Right cardiac atrium (tissue), 5 donors: ENCODE measurements at regions of chr13 and their contacts with region 1.

Region 1: DNA sequence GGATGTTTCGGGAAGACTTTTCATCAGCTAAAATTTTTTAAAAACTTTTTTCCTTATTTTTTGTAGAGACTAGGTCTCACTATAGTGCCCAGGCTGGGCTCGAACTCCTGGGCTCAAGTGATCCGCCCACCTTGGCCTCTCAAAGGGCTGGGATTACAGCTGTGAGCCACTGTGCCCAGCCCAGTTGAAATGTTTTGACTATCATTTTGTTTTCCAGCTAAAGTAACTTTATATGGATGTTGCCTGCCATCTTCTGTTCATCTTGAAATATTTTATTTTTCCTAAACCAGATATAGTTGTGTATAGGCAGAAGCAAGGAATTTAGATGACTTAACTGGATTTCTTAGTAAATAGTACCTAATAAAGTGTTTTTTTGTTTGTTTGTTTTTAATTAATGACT is 7.0 kb downstream of the CAB39L start:
- DNase-seq: peak; percentile 61 to 87 (median 76)
- ATAC-seq: peak; percentile 84 to 86
- H3K4me3 ChIP-seq: no peak overlapping the region
- H3K27ac ChIP-seq: no peak overlapping the region
- H3K4me1 ChIP-seq: no peaks in the 10 kb centered on the region
- H3K27me3 ChIP-seq: no peaks in the 10 kb centered on the region

Region 2: GRCh38 chr13:49300739-49301589 is 135.9 kb before region 1 on chr13:
- intact Hi-C with region 1: loop called (anchors 5 kb)
- DNase-seq: peak; percentile 46 to 79 (median 70)
- ATAC-seq: peak; percentile 71 to 74
- H3K4me3 ChIP-seq: no peak overlapping the region
- H3K27ac ChIP-seq: no peak overlapping the region
- H3K4me1 ChIP-seq: peaks cover 6% of the 10 kb centered on the region
- H3K27me3 ChIP-seq: no peaks in the 10 kb centered on the region

Region 3: DNA sequence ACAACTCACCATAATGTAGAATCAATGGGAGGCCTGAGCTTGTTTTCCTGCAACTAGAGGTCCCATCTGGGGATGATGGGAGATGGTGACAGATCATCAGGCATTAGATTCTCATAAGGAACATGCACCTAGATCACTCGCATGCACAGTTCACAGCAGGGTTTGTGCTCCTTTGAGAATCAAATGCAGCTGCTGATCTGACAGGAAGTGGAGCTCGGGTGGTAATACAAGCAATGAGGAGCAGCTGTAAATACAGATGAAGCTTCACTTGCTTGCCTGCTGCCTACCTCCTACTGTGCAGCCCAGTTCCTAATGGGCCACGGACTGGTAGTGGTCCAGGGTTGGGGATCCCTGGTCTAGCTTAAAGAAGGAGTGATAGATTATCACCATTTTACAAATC is 322.6 kb after region 1 on chr13:
- intact Hi-C with region 1: no loop called
- DNase-seq: no peak
- ATAC-seq: no peak
- H3K4me3 ChIP-seq: no peak overlapping the region
- H3K27ac ChIP-seq: no peak overlapping the region
- H3K4me1 ChIP-seq: no peaks in the 10 kb centered on the region
- H3K27me3 ChIP-seq: no peaks in the 10 kb centered on the region